SK-N-SH (cell line): ENCODE measurements at regions of chr11 and their contacts with region 1.

Region 1: DNA sequence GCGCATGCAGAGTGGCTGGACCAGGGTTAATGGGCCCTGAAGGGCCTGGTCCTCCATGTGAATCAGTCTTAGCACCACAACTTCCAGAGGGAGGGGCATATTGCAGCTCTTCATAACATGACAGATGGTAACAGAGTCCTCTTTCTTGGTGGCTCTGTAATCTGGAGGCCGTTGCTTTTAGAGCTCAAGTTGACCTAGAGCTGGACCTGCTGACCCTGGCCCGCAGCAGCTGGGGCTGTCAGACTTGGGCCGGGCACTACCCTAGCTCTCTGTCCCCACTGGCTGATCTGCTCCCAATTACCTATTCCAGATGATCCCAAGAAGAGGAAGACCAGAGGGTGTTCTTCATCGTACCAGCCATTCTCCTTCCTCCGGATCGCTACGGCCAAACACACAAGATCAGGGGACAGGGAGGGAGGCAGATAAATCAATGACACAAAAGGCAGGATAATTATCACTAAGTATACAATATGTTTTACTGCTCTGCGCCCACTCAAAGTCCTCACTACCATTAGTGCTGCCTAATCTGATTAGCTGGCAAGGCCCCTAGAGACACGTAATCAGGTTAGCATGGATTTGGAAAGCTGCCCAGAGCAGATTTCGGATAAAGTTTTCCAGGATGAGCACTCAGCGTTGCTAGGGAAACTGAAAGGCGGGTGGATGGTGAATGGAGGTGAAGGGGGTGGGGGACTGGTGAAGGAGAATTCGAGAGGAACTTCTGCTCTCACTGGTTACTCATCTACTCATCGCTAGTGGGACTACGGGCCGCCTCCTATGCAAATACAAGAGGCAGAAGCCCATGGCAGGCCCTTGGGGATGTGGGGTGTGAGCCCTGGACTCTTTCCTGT is 64.5 kb upstream of the PHOX2A start:
- DNase-seq: peak; percentile 81
- H3K4me3 ChIP-seq: no peak overlapping the region; a peak in 1 of 4 replicates
- H3K27ac ChIP-seq: peak overlapping the region; percentile 96 to 100
- H3K4me1 ChIP-seq: peaks cover 31 to 76% of the 10 kb centered on the region in 2 experiments
- H3K27me3 ChIP-seq: no peaks in the 10 kb centered on the region
- CTCF ChIP-seq: no peak; the same call in 1 of the 2 replicates
- EP300 ChIP-seq: peak; percentile 93 to 99
- RAD21 ChIP-seq: peak; percentile 43

Region 2: DNA sequence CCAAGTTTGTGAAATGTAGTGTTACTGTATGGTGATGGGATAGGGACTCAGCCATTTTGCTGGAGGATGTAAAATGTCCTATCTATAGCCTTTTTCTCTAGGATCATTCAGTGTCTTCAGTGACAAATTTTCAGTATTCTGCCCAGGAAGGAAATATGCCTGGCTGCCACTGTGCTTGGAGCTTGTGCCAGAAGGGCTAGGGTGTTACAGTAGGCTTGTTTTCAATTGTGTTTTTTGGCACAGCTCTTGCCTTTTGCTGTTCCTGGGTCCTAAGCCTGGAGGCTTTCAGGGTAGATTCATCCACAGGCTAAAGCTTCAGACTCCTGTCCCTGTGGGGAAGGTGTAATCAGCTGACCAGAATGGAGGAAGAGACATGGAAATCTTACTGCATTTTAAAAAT is 42.5 kb before region 1 on chr11:
- CTCF ChIA-PET with region 1: no interaction called
- POLR2A ChIA-PET with region 1: no interaction called
- DNase-seq: no peak
- H3K4me3 ChIP-seq: no peak overlapping the region
- H3K27ac ChIP-seq: no peak overlapping the region
- H3K4me1 ChIP-seq: no peaks in the 10 kb centered on the region; a peak in 2 of 4 replicates
- H3K27me3 ChIP-seq: no peaks in the 10 kb centered on the region
- CTCF ChIP-seq: no peak
- EP300 ChIP-seq: no peak
- RAD21 ChIP-seq: no peak

Region 3: GRCh38 chr11:72321381-72321996 is 13.0 kb after region 1 on chr11:
- CTCF ChIA-PET with region 1: interaction called, 9 read pairs
- POLR2A ChIA-PET with region 1: interaction called, 54 read pairs
- DNase-seq: peak; percentile 78
- H3K4me3 ChIP-seq: no peak overlapping the region
- H3K27ac ChIP-seq: peak overlapping the region; percentile 75 to 100
- H3K4me1 ChIP-seq: peaks cover 34 to 72% of the 10 kb centered on the region in 2 experiments
- H3K27me3 ChIP-seq: no peaks in the 10 kb centered on the region
- CTCF ChIP-seq: no peak
- EP300 ChIP-seq: peak; percentile 95 to 100
- RAD21 ChIP-seq: peak; percentile 44; the same call in 1 of the 2 replicates

Region 4: DNA sequence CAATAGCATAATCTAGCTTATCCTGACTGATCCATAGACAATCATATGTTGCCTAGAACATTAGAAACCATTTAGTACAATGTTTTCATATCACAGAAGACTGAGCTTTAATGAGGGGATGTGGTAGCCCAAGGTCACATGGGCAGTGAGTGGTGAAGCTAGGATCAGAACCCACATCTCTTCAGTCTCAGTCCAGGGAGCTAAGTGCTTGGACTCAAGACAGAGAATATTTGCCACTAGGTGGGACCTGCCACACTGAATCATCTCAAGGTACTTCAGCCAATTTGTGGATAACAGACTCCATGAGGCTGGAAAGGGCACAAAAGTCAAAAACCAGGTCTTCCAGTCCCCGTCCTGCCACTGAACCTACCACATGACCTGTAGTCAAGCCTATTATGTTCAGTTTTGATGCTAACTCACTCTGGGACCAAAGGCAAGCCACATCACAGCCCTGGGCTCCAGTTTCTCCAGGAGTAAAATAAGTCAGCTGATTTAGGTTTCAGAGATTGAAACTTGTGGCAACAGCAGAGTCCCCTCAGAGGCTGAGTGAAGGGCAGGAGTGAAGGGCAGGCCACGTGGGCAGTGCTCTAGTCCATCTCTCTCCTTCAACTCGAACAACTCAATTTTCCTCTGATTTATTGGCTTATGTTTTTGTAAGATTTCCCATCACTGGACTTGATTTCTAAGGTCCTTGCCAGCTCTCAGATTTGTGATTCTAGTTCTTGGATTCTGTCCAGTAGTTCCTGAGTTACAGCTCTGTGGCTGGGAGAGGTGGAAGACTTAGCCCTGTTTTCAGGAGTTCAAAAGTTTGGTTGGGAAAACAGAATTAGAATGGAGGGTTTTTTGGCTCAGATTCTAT is 20.1 kb after region 1 on chr11:
- CTCF ChIA-PET with region 1: interaction called, 12 read pairs
- POLR2A ChIA-PET with region 1: interaction called, 36 read pairs
- DNase-seq: no peak
- H3K4me3 ChIP-seq: no peak overlapping the region
- H3K27ac ChIP-seq: peak overlapping the region; percentile 87 to 100
- H3K4me1 ChIP-seq: peaks cover 62 to 71% of the 10 kb centered on the region in 2 experiments
- H3K27me3 ChIP-seq: no peaks in the 10 kb centered on the region
- CTCF ChIP-seq: peak; percentile 51
- EP300 ChIP-seq: peak; percentile 42 to 61; a peak in 3 of 4 replicates
- RAD21 ChIP-seq: peak; percentile 24; the same call in 1 of the 2 replicates

Region 5: GRCh38 chr11:72333661-72334060 is 25.2 kb after region 1 on chr11:
- CTCF ChIA-PET with region 1: interaction called, 12 read pairs
- POLR2A ChIA-PET with region 1: interaction called, 36 read pairs
- DNase-seq: peak; percentile 61
- H3K4me3 ChIP-seq: no peak overlapping the region
- H3K27ac ChIP-seq: peak overlapping the region; percentile 35 to 99; a peak in 3 of 4 replicates
- H3K4me1 ChIP-seq: peaks cover 32 to 75% of the 10 kb centered on the region in 2 experiments
- H3K27me3 ChIP-seq: no peaks in the 10 kb centered on the region
- CTCF ChIP-seq: peak; percentile 52
- EP300 ChIP-seq: peak in 1 of 2 experiments; percentile 59; a peak in 1 of 4 replicates
- RAD21 ChIP-seq: peak; percentile 73

Region 6: DNA sequence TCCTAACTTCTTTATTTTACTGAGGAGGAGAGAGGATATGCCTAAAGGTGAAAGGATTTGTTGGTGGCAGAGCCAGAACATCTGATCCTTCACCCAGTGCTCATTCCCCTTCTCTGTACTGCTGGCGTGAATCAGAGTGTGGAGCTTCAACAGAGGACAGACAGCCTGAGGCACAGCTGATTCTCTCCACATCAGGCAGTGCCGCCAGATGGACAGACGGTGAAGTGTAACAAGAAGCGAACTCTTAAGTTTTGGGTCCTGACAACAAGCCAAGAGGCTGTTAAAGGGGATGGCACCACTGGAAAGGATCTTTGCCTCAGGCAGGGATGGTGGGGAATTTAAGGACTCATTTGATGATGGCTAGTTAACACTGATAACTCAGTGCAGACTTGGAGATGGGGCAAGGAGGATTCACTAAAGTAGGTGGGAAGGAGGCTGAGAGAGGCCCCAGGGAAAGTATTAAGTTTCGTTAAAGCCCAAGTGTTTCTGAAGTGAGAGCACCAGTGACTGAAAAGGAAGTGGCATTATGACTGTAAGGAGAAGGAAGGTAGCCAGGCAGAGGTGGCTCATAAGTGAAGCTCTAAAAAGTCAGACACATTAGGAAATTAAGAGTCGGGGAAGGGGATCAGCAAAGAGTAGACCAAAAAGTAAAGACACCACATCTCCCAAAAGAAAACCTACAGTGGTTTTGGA is 44.6 kb after region 1 on chr11:
- CTCF ChIA-PET with region 1: interaction called, 637 read pairs
- POLR2A ChIA-PET with region 1: interaction called, 48 read pairs
- DNase-seq: peak; percentile 51
- H3K4me3 ChIP-seq: no peak overlapping the region
- H3K27ac ChIP-seq: peak overlapping the region; percentile 71 to 100
- H3K4me1 ChIP-seq: peaks cover 41 to 92% of the 10 kb centered on the region in 2 experiments
- H3K27me3 ChIP-seq: no peaks in the 10 kb centered on the region
- CTCF ChIP-seq: peak; percentile 77
- EP300 ChIP-seq: peak in 1 of 2 experiments; percentile 86; a peak in 2 of 4 replicates
- RAD21 ChIP-seq: peak; percentile 97

Region 7: DNA sequence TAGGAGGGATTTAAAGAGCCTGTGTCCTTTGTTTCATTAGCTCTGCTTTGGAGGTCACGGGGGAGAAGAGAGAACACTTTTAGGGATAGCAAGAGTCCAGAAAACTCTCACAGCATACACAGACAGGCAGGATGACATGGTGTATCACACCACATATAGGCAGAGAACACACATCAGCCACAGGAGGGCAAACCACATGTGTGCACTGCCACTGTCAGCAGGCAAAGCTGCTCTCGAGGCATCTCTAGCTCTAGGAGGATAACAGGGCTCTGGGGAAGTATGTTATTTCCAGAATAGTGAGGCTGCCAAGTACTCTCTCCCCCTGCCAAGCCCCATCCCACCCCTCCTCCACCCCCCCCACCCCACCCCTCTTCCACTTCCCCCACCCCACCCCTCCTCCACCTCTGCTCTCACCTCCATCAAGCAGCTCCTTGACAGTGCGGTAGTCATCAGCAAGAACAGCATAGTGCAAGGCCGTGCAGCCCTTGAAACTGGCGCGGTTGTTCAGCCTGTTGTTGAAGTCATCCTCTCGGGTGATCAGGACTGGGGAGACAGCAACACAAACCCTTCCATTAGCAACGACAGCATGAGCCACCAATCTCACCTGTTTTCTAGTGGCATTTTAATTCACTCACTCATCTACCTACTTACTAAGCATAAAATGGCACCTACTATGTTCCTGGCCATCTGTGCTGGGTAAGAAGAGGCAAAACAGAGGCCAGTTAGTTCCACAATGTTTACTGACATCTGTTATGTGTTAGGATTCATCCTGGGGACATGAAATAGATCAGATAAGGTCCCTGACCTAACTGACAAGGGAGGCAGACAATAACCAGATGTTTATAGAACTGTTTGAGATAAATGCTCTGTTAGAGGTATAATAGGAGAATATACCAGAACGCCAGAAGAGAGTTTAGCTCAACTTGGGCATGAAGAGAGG is 50.3 kb after region 1 on chr11:
- CTCF ChIA-PET with region 1: interaction called, 637 read pairs
- POLR2A ChIA-PET with region 1: interaction called, 27 read pairs
- DNase-seq: peak; percentile 74
- H3K4me3 ChIP-seq: peak overlapping the region; percentile 38 to 44; a peak in 3 of 4 replicates
- H3K27ac ChIP-seq: peak overlapping the region; percentile 76 to 100
- H3K4me1 ChIP-seq: peaks cover 21 to 71% of the 10 kb centered on the region in 2 experiments; a peak in 3 of 4 replicates
- H3K27me3 ChIP-seq: no peaks in the 10 kb centered on the region
- CTCF ChIP-seq: no peak
- EP300 ChIP-seq: peak; percentile 98 to 100
- RAD21 ChIP-seq: peak; percentile 59

Region 8: GRCh38 chr11:72373163-72373562 is 64.7 kb after region 1 on chr11:
- CTCF ChIA-PET with region 1: interaction called, 4 read pairs
- POLR2A ChIA-PET with region 1: interaction called, 11 read pairs
- DNase-seq: no peak
- H3K4me3 ChIP-seq: no peak overlapping the region
- H3K27ac ChIP-seq: peak overlapping the region in 1 of 2 experiments; percentile 99; a peak in 2 of 4 replicates
- H3K4me1 ChIP-seq: peaks cover 20 to 44% of the 10 kb centered on the region in 2 experiments
- H3K27me3 ChIP-seq: no peaks in the 10 kb centered on the region
- CTCF ChIP-seq: no peak
- EP300 ChIP-seq: 0 out of 4 replicates have a peak, but pooled peaks of 1 of the 2 experiments have one; percentile 13
- RAD21 ChIP-seq: no peak